ENCODE measurements at regions of chr6 and their contacts with region 1.

Region 1: DNA sequence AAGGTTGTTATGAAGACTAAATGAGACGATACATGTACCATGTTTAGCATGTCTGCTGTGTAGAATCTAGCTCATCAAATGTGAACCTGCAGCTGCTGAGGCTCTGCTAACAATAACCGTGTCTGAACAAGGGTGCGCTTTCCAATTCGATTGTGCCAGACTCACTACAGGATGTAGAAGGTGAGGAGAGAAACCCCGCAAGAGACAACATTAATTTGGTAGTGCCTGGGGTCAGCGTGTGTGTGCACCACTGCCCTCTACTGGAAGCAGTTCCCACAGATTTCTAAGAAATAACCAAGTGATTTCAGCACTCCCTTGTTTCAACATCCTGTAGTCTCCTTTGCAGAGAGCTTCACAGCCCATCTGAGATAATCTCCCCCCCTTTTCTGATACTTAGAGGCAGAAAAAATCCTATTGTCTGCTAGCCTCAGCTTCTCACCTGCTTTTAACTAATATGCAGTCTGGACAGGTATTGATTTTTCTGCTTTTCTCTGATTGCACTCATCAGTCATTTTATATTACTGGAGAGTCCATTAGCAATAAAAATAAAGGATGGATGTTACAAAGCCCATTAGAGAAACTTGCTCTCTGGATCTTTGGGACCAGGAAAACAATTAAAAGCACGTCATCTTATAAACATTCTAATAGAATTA is 96.7 kb upstream of the BACH2 start:
- DNase-seq: peak; percentile 73 to 75 (median 73)
- H3K4me3 ChIP-seq: no peak overlapping the region
- H3K4me3 Mint-ChIP-seq: peak overlapping the region in 2 of 8 donors; percentile 23 to 24
- H3K27ac ChIP-seq: no peak overlapping the region
- H3K27ac Mint-ChIP-seq: peak overlapping the region in 4 of 7 donors; percentile 5 to 72 (median 38)
- H3K4me1 ChIP-seq: peaks cover 30% of the 10 kb centered on the region
- H3K4me1 Mint-ChIP-seq: peaks cover 22 to 40% (median 27%) of the 10 kb centered on the region in 4 donors
- H3K27me3 ChIP-seq: no peaks in the 10 kb centered on the region
- H3K27me3 Mint-ChIP-seq: no peaks in the 10 kb centered on the region

Region 2: DNA sequence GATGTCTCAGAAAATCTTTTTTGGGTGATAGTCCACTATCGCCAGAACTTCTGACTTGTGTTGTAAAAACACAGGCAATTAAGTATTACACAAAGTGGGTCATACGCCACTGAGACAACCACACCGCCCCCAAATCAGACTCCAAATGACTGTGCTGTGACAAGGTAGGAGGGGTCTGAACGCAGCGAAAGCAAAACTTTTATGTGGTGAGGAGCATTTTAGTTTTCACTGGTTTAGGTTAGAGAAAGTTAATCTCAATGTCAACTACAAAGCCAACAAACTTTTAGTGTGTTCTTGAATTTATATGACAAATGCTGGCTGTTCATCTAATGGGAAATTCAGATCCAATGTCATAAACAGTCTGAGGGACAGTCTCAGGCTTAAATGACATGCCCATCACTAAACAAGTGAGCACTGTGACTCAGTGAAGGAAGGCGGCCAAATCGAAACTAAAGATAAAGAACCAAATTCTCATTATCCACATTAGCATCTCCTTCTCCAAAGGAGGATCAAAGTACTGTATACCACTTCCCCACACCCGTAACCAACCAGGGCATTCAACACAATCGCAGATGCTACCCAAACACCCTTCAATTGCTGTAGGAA is 312.4 kb before region 1 on chr6:
- CTCF ChIA-PET with region 1: interaction called, 3 read pairs
- POLR2A ChIA-PET with region 1: interaction called, 4 read pairs
- intact Hi-C with region 1: loop called (anchors 5 kb)
- DNase-seq: peak; percentile 76 to 90 (median 84)
- H3K4me3 ChIP-seq: peak overlapping the region; percentile 24 to 54
- H3K4me3 Mint-ChIP-seq: peak overlapping the region; percentile 80 to 98 (median 96)
- H3K27ac ChIP-seq: peak overlapping the region; percentile 64
- H3K27ac Mint-ChIP-seq: peak overlapping the region; percentile 91 to 99 (median 98)
- H3K4me1 ChIP-seq: peaks cover 75% of the 10 kb centered on the region
- H3K4me1 Mint-ChIP-seq: peaks cover 64 to 94% (median 79%) of the 10 kb centered on the region in 4 donors
- H3K27me3 ChIP-seq: no peaks in the 10 kb centered on the region
- H3K27me3 Mint-ChIP-seq: no peaks in the 10 kb centered on the region

Region 3: GRCh38 chr6:90285611-90286381 is 107.6 kb before region 1 on chr6:
- CTCF ChIA-PET with region 1: interaction called, 38 read pairs
- POLR2A ChIA-PET with region 1: interaction called, 9 read pairs
- intact Hi-C with region 1: loop called (anchors 1 kb)
- DNase-seq: peak; percentile 68 to 83 (median 76)
- H3K4me3 ChIP-seq: peak overlapping the region; percentile 1 to 58
- H3K4me3 Mint-ChIP-seq: peak overlapping the region; percentile 80 to 95 (median 86)
- H3K27ac ChIP-seq: peak overlapping the region; percentile 46
- H3K27ac Mint-ChIP-seq: peak overlapping the region; percentile 77 to 98 (median 89)
- H3K4me1 ChIP-seq: peaks cover 32% of the 10 kb centered on the region
- H3K4me1 Mint-ChIP-seq: peaks cover 47 to 89% (median 68%) of the 10 kb centered on the region in 4 donors
- H3K27me3 ChIP-seq: no peaks in the 10 kb centered on the region
- H3K27me3 Mint-ChIP-seq: peaks cover 0 to 2% of the 10 kb centered on the region in 2 donors

Region 4: DNA sequence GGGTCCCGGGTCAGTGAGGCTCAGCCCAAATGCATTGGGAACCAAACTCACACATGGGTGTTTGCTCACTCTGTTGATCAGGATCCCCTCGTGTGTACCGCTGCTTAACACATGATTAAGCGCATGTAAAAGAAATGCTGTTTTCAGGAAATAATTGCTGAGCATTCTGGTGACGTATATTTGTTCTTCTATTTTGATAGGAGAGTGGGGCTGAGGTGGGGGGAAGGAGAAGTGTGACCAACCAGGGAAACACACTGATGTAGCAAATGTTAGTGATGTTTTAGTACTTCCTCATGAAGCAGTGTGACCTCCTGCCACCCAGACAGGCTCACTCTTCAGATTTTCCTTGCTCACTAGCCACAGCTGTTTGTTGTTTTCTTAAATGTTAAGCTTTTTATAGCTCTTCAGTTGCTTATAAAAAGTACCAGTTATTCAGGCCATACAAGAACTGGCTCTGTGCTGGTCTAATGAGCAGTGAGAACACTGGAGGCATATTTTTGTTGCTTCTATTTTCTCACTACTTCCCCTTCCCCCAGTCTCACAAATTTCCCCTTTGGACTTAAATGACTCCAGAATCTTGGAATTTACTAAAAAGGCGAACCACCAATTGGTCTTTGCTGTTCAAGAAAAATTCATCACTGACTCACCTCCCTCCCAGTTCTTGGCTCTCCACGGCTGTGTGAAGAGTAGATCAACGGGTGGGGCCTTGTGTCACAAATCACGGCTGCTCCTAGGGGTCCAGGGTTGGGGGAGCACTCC is 17.5 kb before region 1 on chr6:
- CTCF ChIA-PET with region 1: interaction called, 19 read pairs
- POLR2A ChIA-PET with region 1: no interaction called
- intact Hi-C with region 1: no loop called
- DNase-seq: no peak
- H3K4me3 ChIP-seq: no peak overlapping the region
- H3K4me3 Mint-ChIP-seq: no peak overlapping the region
- H3K27ac ChIP-seq: no peak overlapping the region
- H3K27ac Mint-ChIP-seq: no peak overlapping the region
- H3K4me1 ChIP-seq: no peaks in the 10 kb centered on the region
- H3K4me1 Mint-ChIP-seq: peaks cover 0 to under 1% (median 0%) of the 10 kb centered on the region in 4 donors
- H3K27me3 ChIP-seq: peaks cover 4% of the 10 kb centered on the region
- H3K27me3 Mint-ChIP-seq: peaks cover 2% of the 10 kb centered on the region in 2 donors

Region 5: DNA sequence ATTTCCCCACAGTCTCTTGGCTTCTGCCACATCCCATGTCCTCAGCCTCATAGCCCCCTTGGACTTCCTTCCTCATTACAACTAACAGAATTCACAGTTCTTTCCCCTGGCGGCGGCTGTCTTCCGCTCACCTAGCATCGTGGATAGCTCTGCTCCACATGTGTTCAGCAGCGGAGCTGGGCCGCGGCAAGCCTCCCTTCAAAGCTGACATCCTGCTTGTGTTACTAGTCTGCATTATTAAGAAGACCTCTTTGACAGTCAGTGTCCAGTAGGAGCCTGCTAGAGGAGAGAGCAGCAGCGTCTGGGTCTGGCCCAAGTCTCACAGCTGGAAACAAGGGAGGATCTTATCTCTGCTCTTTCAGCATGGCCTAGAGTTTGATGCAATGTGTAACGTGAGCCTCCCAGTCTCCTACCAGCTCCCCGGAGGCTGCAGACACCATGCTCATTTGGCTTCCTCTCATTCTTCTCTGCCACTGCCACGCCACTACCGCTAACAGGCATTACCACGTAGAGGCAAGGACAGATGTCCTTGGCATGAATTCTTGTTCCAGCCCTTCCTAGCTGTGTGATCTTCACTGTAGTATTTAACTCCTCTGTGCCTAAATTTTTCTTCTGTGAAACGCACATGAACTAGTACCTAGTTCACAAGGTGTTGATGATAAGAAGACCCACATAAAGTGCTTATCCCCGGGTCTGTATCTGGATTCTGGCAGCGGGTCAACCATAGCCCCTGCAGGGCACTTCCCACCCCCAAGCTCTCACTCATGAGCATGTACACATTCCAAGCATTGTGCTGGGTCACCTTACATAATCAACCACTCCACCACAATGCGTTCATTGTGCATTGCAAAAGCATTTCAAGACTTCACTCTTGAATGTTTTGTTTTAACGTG is 10.4 kb after region 1 on chr6:
- CTCF ChIA-PET with region 1: interaction called, 32 read pairs
- POLR2A ChIA-PET with region 1: interaction called, 15 read pairs
- intact Hi-C with region 1: no loop called
- DNase-seq: peak in 1 of 5 donors; percentile 9
- H3K4me3 ChIP-seq: no peak overlapping the region
- H3K4me3 Mint-ChIP-seq: peak overlapping the region in 6 of 8 donors; percentile 21 to 76 (median 60)
- H3K27ac ChIP-seq: no peak overlapping the region
- H3K27ac Mint-ChIP-seq: peak overlapping the region; percentile 80 to 94 (median 90)
- H3K4me1 ChIP-seq: peaks cover 63% of the 10 kb centered on the region
- H3K4me1 Mint-ChIP-seq: peaks cover 38 to 66% (median 50%) of the 10 kb centered on the region in 4 donors
- H3K27me3 ChIP-seq: no peaks in the 10 kb centered on the region
- H3K27me3 Mint-ChIP-seq: no peaks in the 10 kb centered on the region

Region 6: DNA sequence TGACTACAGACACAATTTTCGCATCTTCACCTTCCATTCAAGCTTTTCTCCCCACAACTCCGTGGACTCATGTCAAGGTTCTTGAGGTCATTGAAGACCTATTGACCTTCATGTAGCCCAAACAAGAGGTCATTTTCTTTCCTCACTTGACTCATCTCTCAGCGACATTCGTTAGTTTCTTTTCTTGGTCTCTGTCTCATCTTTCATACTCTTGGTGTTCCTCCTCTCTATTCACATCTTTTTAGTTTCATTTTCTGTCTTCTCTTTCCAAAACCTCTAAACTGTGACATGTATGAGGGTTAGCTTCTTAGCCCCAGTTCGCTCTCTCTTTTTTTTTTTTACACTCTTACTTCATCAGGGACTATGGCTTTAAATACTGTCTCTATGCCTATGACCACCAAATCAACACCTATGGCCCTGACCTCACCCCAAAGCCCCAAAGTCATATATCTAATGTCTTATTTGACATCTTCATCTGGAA is 31.8 kb after region 1 on chr6:
- CTCF ChIA-PET with region 1: interaction called, 29 read pairs
- POLR2A ChIA-PET with region 1: interaction called, 198 read pairs
- intact Hi-C with region 1: loop called (anchors 1 kb)
- DNase-seq: peak; percentile 29 to 58 (median 49)
- H3K4me3 ChIP-seq: peak overlapping the region in 1 of 2 donors; percentile 36
- H3K4me3 Mint-ChIP-seq: peak overlapping the region; percentile 63 to 88 (median 82)
- H3K27ac ChIP-seq: peak overlapping the region; percentile 50
- H3K27ac Mint-ChIP-seq: peak overlapping the region; percentile 58 to 95 (median 91)
- H3K4me1 ChIP-seq: peaks cover 20% of the 10 kb centered on the region
- H3K4me1 Mint-ChIP-seq: peaks cover 13 to 19% (median 16%) of the 10 kb centered on the region in 4 donors
- H3K27me3 ChIP-seq: no peaks in the 10 kb centered on the region
- H3K27me3 Mint-ChIP-seq: no peaks in the 10 kb centered on the region

Region 7: DNA sequence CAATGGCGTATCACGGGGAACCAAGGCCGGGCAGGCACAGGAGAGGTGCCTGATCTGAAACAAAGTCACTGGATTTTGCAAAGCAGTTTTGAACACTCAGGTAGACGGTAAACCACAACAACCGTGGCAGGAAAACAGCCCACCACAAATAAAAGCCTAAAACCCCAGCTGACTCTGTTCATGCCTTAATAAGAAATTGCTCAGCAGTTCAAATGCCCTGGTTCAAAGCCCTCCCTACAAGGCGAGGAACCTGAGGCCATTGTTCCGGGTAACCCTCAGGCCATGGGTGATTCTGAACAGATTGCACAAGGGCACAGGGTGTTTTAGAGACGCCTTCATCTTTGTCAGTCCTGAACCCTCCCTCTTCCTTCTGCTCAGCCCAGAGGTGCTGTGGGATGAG is 79.4 kb after region 1 on chr6:
- CTCF ChIA-PET with region 1: interaction called, 162 read pairs
- POLR2A ChIA-PET with region 1: interaction called, 11 read pairs
- intact Hi-C with region 1: no loop called
- DNase-seq: peak in 4 of 5 donors; percentile 25 to 44 (median 36)
- H3K4me3 ChIP-seq: no peak overlapping the region
- H3K4me3 Mint-ChIP-seq: peak overlapping the region; percentile 63 to 87 (median 78)
- H3K27ac ChIP-seq: no peak overlapping the region
- H3K27ac Mint-ChIP-seq: peak overlapping the region in 6 of 7 donors; percentile 11 to 79 (median 76)
- H3K4me1 ChIP-seq: peaks cover 43% of the 10 kb centered on the region
- H3K4me1 Mint-ChIP-seq: peaks cover 28 to 66% (median 36%) of the 10 kb centered on the region in 4 donors
- H3K27me3 ChIP-seq: no peaks in the 10 kb centered on the region
- H3K27me3 Mint-ChIP-seq: no peaks in the 10 kb centered on the region